Endothelial cell of umbilical vein (primary cell): ENCODE measurements at regions of chr14 and their contacts with region 1.

Region 1: DNA sequence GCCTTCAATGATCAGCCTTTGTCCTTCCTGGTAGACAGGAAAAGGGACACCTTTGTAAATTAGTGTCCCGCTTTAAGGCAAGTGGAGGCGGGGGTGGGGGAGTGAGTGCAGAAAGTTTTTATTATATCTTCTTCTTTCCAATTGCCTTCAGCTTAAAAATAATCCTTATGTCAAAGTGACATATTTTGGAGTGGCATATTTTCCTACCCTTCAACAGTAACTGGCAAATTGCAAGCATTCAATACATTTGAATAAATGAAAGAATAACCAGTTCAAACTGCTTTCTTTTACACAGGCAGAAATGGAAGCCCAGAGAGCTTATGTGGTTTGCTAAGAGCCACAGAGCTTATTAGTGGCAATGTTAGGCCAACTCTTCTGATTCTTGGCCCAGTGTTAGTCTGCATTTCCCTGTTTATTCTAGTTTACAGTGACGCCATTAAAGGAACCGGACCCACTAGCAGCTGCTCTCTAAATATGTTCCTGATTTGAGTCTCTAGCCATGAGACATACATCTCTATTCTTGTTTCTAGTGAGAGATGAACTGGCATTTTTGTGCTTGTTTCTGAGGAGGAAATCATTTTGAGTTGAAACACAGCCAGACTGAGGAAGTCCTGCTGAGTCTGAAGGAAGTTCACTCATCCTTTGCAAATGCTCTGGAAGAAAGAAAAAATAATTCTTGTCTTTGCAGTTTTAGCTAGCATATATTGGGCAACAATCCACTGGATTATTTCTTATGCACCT is 468.7 kb downstream of the NOVA1 start:
- DNase-seq: peak; percentile 87
- H3K4me3 ChIP-seq: no peak overlapping the region
- H3K27ac ChIP-seq: peak overlapping the region; percentile 76
- H3K4me1 ChIP-seq: peaks cover 33% of the 10 kb centered on the region
- H3K27me3 ChIP-seq: no peaks in the 10 kb centered on the region
- CTCF ChIP-seq: no peak
- POLR2A ChIP-seq: peak; percentile 14

Region 2: GRCh38 chr14:25394356-25394755 is 734.7 kb before region 1 on chr14:
- CTCF ChIA-PET with region 1: no interaction called
- POLR2A ChIA-PET with region 1: no interaction called
- dilution Hi-C with region 1: no loop called
- intact Hi-C with region 1: loop called (anchors 5 kb)
- DNase-seq: no peak
- H3K4me3 ChIP-seq: no peak overlapping the region
- H3K27ac ChIP-seq: peak overlapping the region; percentile 85
- H3K4me1 ChIP-seq: peaks cover 55% of the 10 kb centered on the region
- H3K27me3 ChIP-seq: no peaks in the 10 kb centered on the region
- CTCF ChIP-seq: no peak
- POLR2A ChIP-seq: no peak

Region 3: GRCh38 chr14:26067786-26068459 is 61.2 kb before region 1 on chr14:
- CTCF ChIA-PET with region 1: no interaction called
- POLR2A ChIA-PET with region 1: no interaction called
- dilution Hi-C with region 1: no loop called
- intact Hi-C with region 1: loop called (anchors 2 kb)
- DNase-seq: peak; percentile 30
- H3K4me3 ChIP-seq: no peak overlapping the region
- H3K27ac ChIP-seq: peak overlapping the region; percentile 35
- H3K4me1 ChIP-seq: peaks cover 15% of the 10 kb centered on the region
- H3K27me3 ChIP-seq: no peaks in the 10 kb centered on the region
- CTCF ChIP-seq: no peak
- POLR2A ChIP-seq: no peak

Region 4: DNA sequence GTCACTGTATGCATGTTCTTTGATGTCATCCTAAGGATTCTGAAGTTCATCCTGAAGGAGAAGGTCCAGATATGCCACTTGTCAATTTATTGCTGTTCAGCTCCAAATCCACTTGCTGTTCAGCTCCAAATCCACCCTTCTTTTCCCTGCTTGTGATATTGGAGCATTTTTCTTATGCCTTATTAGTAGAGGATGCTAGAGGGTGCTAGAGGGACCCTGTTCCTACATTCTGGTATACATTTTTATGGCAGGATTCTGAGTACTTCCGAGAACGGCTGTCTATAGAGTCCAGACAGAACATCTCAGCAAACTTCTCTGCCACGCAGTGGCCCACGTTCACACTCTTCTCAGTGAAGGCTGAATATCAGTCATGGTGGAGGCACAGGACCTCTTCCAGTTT is 62.0 kb after region 1 on chr14:
- CTCF ChIA-PET with region 1: no interaction called
- POLR2A ChIA-PET with region 1: no interaction called
- dilution Hi-C with region 1: no loop called
- intact Hi-C with region 1: no loop called
- DNase-seq: no peak
- H3K4me3 ChIP-seq: no peak overlapping the region
- H3K27ac ChIP-seq: no peak overlapping the region
- H3K4me1 ChIP-seq: peaks cover 7% of the 10 kb centered on the region
- H3K27me3 ChIP-seq: no peaks in the 10 kb centered on the region
- CTCF ChIP-seq: no peak
- POLR2A ChIP-seq: no peak